ENCODE measurements at regions of chr5 and their contacts with region 1.

Region 1: DNA sequence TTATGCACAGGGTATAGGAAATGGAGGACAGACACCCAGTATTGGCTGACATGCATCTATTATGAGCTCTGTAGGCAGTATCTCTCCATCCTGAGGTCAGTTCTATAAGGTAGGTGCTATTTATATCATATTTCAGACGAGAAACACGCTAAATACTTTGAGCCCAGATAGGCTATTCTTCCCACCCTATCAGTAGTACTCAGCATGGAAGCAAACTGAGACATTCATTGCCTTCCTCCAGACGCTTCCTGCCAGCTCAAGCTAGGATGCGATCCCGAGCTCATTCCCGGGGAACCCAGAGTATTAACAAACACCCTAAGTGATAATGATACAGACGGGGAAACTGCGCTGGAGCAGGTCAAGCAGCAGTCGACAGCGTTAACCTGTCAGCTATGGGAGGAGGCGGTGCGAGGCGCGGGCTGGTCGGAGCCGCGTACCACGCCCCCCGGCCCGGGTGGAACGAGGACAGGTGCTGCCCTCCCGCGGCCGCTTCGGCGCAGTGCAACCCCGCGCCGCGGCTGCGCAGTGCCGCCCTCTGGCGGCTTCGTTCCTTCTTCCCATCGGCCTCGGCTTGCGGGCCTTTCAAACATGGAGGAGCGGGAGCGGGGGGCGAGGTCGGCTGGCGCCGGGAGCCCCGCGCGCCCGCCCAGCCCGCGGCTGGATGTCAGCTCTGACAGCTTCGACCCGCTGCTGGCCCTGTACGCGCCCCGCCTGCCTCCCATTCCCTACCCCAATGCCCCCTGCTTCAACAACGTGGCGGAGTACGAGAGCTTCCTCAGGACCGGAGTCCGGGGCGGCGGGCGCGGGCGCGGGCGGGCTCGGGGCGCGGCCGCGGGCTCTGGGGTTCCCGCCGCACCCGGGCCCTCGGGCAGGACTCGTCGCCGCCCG is at the start of gene LSM11:
- DNase-seq: peak; percentile 91
- H3K4me3 Mint-ChIP-seq: peak within 1 kb of the TSS; percentile 85
- H3K27ac Mint-ChIP-seq: peak within 1 kb of the TSS; percentile 78
- H3K4me1 Mint-ChIP-seq: peaks cover 36% of the 10 kb centered on the region
- H3K27me3 Mint-ChIP-seq: no peaks in the 10 kb centered on the region

Region 2: GRCh38 chr5:157342822-157343402 is 400.5 kb before region 1 on chr5:
- CTCF ChIA-PET with region 1: interaction called, 13 read pairs
- DNase-seq: peak; percentile 48
- H3K4me3 Mint-ChIP-seq: no peak overlapping the region
- H3K27ac Mint-ChIP-seq: no peak overlapping the region
- H3K4me1 Mint-ChIP-seq: peaks cover 8% of the 10 kb centered on the region
- H3K27me3 Mint-ChIP-seq: no peaks in the 10 kb centered on the region

Region 3: DNA sequence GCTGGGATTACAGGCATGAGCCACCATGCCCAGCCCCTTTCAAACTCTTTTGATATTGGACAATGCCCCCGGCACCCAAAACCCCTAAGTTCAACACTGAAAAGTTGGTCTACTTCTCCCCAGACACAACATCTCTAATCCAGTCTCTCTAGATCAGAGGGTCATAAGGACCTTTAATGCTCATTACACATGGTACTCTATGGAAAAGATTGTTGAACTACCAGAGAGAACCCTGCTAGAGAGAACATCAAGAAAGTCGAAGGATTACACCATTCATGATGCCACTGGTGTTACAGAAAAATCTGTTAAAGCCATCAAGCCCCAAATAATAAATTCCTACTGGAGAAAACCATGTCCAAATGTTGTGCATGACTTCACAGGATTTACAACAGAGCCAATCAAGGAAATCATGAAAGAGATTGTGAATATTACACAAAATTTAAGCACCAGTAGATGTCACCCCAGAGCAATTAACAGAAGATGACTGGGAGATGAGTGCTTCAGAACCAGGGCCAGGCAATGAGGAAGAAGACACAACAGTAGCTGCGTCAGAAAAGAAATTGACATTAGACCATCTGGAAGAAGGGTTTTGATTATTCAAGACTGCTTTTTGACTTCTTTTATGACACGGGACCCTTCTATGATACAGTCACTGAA is 311.7 kb before region 1 on chr5:
- CTCF ChIA-PET with region 1: interaction called, 33 read pairs
- DNase-seq: peak; percentile 38
- H3K4me3 Mint-ChIP-seq: no peak overlapping the region
- H3K27ac Mint-ChIP-seq: no peak overlapping the region
- H3K4me1 Mint-ChIP-seq: peaks cover 9% of the 10 kb centered on the region
- H3K27me3 Mint-ChIP-seq: peaks cover 40% of the 10 kb centered on the region

Region 4: DNA sequence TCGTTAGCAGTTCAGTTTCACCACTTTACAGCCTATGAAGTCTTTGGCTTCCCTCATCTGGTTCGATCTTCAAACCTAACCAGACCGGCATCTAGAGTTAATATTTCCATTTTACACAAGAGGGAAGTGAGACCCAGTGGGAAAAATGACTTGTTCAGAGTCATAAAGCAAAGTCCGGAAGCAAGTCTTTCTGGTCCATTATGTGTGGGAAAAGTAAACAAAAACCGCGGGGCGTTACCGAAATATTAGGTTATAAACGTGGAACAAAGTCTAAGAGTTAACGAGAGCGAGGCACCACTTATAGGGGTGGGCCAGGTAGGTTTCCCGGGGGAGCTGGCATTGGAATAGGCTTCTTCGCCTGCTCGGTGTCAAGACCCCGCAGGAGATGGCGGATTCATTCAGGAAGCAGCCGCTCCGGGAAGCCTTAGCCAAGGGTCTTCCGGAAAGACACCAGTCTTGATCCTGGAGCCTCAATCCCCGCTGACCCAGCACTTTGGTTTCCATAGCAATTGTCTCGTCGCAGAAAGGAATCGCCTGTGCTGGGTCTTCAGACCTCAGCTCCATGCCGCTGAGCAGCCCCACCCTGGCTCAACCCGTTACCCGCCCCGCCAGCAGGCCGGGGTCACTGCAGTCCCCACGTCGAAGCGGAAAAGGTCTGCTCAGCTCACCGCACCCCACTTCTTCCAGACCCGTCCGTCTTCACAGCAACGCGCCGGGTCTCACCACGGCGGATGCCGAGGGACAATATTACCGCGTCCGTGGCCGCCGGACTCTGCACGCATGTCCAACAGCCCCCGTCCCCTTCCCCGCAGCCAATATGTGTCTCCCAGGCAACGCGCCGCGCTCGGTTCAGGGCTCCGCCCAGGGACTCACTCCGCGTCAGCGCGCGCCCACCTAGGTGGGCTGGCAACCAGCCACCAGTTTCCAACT is 72.5 kb before region 1 on chr5 and contains the start of gene C5orf52:
- CTCF ChIA-PET with region 1: interaction called, 32 read pairs
- DNase-seq: peak; percentile 43
- H3K4me3 Mint-ChIP-seq: peak within 1 kb of the TSS; percentile 83
- H3K27ac Mint-ChIP-seq: peak within 1 kb of the TSS; percentile 60
- H3K4me1 Mint-ChIP-seq: peaks cover 30% of the 10 kb centered on the region
- H3K27me3 Mint-ChIP-seq: peaks cover 66% of the 10 kb centered on the region

Region 5: DNA sequence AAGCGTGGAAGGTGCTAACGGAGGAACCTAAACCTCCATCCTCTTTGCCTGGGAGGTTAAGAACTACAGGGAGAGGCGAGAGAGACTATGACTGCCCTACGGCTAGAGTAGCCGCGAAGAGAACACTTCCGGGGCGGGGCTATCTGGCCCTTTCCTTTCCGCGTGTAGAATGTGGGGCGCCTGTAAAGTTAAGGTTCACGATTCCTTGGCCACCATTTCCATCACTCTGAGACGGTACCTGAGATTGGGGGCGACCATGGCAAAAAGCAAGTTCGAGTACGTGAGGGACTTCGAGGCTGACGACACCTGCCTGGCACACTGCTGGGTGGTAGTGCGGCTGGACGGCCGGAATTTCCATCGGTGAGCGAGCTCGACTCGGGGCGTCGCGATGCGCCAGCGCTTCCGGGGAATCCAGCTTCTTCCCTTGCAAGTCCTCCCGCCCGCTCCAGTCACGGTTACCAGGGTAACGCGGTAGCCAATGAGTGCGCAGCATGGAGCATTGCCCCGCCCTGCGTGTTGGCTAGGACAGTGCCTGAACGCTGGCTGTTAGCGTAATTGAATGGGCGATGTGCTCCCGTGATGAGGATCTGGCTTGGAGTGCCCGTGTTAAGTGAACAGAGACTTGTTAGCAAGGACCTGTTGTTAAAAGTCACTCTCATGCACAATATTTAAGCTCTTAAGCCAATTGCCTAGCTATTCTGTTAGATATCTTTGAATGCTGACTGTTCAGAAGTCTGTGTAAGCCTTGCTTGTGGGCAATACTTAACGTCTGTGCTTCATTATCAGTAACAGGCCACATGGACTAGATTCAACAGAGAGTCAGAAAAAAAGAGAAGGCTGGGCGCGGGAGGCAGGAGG is 11.9 kb before region 1 on chr5 and contains the start of gene THG1L:
- CTCF ChIA-PET with region 1: interaction called, 16 read pairs
- DNase-seq: peak; percentile 99
- H3K4me3 Mint-ChIP-seq: peak within 1 kb of the TSS; percentile 95
- H3K27ac Mint-ChIP-seq: peak within 1 kb of the TSS; percentile 96
- H3K4me1 Mint-ChIP-seq: peaks cover 22% of the 10 kb centered on the region
- H3K27me3 Mint-ChIP-seq: no peaks in the 10 kb centered on the region

Measured in activated naive CD4-positive, alpha-beta T cell treated with anti-CD3 and anti-CD28 coated beads, Interleukin-2, amount 10 ng/mL, durations not matched to agents 7 days and 5 days (primary cell).